Mammary epithelial cell (primary cell): ENCODE measurements at regions of chr19 and their contacts with region 1.

Region 1: GRCh38 chr19:38020311-38020710 is 113.3 kb downstream of the SIPA1L3 start:
- DNase-seq: no peak
- H3K4me3 ChIP-seq: no peak overlapping the region
- H3K27ac ChIP-seq: no peak overlapping the region
- H3K4me1 ChIP-seq: peaks cover 5% of the 10 kb centered on the region
- H3K27me3 ChIP-seq: no peaks in the 10 kb centered on the region
- CTCF ChIP-seq: no peak

Region 2: DNA sequence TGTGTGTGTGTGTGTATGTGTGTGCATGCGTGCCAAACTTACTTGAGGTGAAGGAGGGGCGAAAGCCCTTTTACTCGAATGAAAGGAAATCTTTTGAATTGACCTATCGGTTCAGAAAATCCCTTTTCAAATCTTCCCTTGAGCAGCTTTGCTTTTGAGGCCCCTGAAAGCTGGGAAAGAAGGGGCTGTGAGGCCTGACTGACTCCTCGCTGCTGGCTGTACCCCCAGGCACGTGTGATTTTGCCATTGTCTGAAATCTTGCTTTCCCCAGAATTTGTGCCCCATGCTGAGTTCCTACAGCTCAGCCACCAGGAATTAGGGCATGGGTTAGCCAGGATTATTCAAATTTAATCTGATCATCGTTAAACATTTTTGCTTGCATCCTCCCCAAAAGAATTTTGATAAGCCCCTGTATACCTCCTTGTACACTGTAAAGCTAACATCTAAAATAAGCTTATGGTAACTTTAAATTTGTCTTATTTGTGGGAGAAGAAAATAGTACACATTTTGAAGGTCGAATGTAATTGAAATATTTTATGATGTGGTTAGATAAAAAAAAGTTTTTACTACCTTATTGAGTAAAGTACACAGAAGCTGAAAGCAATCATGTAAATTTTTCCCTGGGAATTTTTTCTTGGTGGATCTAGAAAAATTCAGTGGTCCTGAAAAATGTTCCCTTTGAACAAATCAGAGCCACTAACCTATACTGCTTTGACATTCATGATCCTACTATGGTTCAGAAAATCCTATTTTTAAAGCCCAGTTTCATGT is 66.6 kb before region 1 on chr19:
- CTCF ChIA-PET with region 1: no interaction called
- dilution Hi-C with region 1: no loop called
- in situ Hi-C with region 1: no loop called
- intact Hi-C with region 1: no loop called
- DNase-seq: no peak
- H3K4me3 ChIP-seq: no peak overlapping the region
- H3K27ac ChIP-seq: no peak overlapping the region
- H3K4me1 ChIP-seq: peaks cover 16% of the 10 kb centered on the region
- H3K27me3 ChIP-seq: no peaks in the 10 kb centered on the region
- CTCF ChIP-seq: no peak

Region 3: DNA sequence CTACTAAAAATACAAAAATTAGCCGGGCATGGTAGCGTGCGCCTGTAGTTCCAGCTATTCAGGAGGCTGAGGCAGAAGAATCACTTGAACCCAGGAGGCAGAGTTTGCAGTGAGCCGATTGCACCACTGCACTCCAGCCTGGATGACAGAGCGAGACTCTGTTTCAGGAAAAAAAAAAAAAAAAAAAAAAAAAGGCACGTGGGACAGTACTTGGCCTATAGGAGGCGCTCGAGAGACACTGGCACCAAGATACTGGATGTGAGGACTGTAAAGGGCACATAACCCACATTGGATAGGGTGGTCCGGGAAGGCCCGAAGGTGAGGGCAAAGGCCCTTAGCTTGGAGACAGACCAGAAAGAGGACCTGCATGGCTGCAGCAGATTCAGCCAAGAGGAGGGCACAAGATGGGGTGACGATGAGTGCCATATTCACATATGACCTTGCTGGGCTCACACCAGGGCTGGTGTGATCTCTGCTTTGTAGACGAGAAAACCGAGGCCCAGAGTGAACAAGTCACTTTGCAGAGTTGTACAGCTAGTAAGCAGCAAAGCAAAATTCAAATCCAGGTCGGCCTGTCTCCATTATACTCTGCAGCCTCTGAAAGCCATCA is 114.3 kb after region 1 on chr19:
- CTCF ChIA-PET with region 1: interaction called, 22 read pairs
- dilution Hi-C with region 1: no loop called
- in situ Hi-C with region 1: no loop called
- intact Hi-C with region 1: no loop called
- DNase-seq: peak; percentile 39
- H3K4me3 ChIP-seq: no peak overlapping the region
- H3K27ac ChIP-seq: no peak overlapping the region
- H3K4me1 ChIP-seq: peaks cover 17% of the 10 kb centered on the region
- H3K27me3 ChIP-seq: no peaks in the 10 kb centered on the region
- CTCF ChIP-seq: peak; percentile 53 to 77